CD8-positive, alpha-beta T cell (primary cell): ENCODE measurements at regions of chr3 and their contacts with region 1.

Region 1: DNA sequence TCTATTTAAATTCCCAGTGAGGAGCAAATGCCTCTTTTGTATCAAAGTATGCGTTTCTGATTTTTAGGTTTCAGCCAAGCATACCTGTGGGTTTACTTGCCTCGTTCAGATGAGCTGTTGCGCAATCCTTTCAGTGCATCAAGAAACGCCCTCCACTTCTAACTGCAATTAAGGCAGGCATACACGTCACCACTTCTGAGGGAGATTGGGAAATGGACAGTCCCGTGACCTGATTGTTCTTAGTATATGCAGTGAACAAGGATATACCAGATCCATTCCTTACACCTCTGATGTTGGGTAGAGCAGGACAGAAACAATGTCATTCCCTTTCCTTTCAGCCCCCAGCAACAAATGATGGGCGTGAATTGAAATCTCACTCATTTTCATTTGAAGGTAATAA is 219.0 kb downstream of the ITPR1 start:
- DNase-seq: peak in 1 of 9 experiments; percentile 16
- ATAC-seq: no peak
- H3K4me3 ChIP-seq: no peak overlapping the region
- H3K4me3 Mint-ChIP-seq: no peak overlapping the region
- H3K27ac ChIP-seq: no peak overlapping the region
- H3K27ac Mint-ChIP-seq: no peak overlapping the region
- H3K4me1 ChIP-seq: no peaks in the 10 kb centered on the region
- H3K4me1 Mint-ChIP-seq: no peaks in the 10 kb centered on the region
- H3K27me3 ChIP-seq: no peaks in the 10 kb centered on the region
- H3K27me3 Mint-ChIP-seq: no peaks in the 10 kb centered on the region
- CTCF ChIP-seq: no peak

Region 2: DNA sequence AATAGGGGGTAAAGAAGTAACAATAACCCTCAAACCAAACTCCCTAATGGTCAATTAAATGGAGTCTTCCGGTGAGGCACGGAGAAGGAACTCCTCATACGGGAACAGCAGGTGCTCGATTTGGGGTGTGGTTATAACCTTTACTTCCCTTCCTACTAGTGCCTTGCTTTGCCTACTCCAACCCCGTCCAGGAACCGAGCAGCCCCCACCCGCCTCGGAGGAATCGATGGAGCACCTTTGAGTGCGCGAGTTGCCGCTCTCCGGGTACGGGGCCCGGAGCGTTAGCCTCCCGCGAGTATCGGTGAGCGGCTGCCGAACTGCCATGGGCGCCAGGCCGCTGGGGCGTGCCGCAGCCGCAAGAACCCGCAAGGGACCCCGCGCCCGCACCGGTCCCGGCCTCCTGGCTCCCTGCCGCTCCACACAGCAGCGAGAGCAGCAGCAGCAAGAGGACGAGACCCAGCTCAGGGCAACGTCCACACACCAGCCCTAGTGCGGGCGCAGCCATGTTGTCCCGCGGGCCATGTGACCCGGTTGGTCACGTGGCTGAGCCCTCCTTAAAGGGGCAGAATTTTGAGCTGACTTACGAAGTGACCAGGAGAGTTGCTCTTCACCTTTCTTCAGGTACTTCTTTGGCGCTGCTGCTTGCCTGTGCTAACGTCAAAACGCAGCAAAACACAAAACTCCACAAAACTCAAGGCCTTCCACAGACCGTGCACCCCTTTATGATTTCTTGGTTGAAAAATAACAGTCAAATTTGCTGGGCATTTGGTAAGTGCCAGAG is 245.2 kb before region 1 on chr3 and contains the start of gene SUMF1:
- CTCF ChIA-PET with region 1: no interaction called
- POLR2A ChIA-PET with region 1: no interaction called
- intact Hi-C with region 1: loop called in 1 of 2 experiments (anchors 5 kb)
- DNase-seq: peak; percentile 34 to 85 (median 73)
- ATAC-seq: peak; percentile 93
- H3K4me3 ChIP-seq: peak within 1 kb of the TSS; percentile 75 to 76
- H3K4me3 Mint-ChIP-seq: peak within 1 kb of the TSS; percentile 91
- H3K27ac ChIP-seq: peak within 1 kb of the TSS; percentile 68 to 72
- H3K27ac Mint-ChIP-seq: peak within 1 kb of the TSS; percentile 95
- H3K4me1 ChIP-seq: peaks cover 13% of the 10 kb centered on the region
- H3K4me1 Mint-ChIP-seq: peaks cover 23% of the 10 kb centered on the region
- H3K27me3 ChIP-seq: no peaks in the 10 kb centered on the region
- H3K27me3 Mint-ChIP-seq: no peaks in the 10 kb centered on the region
- CTCF ChIP-seq: no peak
- total RNA-seq, gene SUMF1: 7.6 to 7.8 TPM

Region 3: GRCh38 chr3:4524088-4525023 is 187.8 kb before region 1 on chr3:
- CTCF ChIA-PET with region 1: no interaction called
- POLR2A ChIA-PET with region 1: no interaction called
- intact Hi-C with region 1: no loop called
- DNase-seq: no peak
- ATAC-seq: no peak
- H3K4me3 ChIP-seq: no peak overlapping the region
- H3K4me3 Mint-ChIP-seq: no peak overlapping the region
- H3K27ac ChIP-seq: no peak overlapping the region
- H3K27ac Mint-ChIP-seq: no peak overlapping the region
- H3K4me1 ChIP-seq: peaks cover 5% of the 10 kb centered on the region
- H3K4me1 Mint-ChIP-seq: peaks cover 35% of the 10 kb centered on the region
- H3K27me3 ChIP-seq: no peaks in the 10 kb centered on the region
- H3K27me3 Mint-ChIP-seq: no peaks in the 10 kb centered on the region
- CTCF ChIP-seq: no peak

Region 4: GRCh38 chr3:4776980-4777581 is 64.9 kb after region 1 on chr3:
- CTCF ChIA-PET with region 1: interaction called, 14 read pairs
- POLR2A ChIA-PET with region 1: no interaction called
- intact Hi-C with region 1: no loop called
- DNase-seq: no peak
- ATAC-seq: no peak
- H3K4me3 ChIP-seq: no peak overlapping the region
- H3K4me3 Mint-ChIP-seq: no peak overlapping the region
- H3K27ac ChIP-seq: no peak overlapping the region
- H3K27ac Mint-ChIP-seq: peak overlapping the region; percentile 76
- H3K4me1 ChIP-seq: no peaks in the 10 kb centered on the region
- H3K4me1 Mint-ChIP-seq: no peaks in the 10 kb centered on the region
- H3K27me3 ChIP-seq: no peaks in the 10 kb centered on the region
- H3K27me3 Mint-ChIP-seq: no peaks in the 10 kb centered on the region
- CTCF ChIP-seq: no peak

Region 5: DNA sequence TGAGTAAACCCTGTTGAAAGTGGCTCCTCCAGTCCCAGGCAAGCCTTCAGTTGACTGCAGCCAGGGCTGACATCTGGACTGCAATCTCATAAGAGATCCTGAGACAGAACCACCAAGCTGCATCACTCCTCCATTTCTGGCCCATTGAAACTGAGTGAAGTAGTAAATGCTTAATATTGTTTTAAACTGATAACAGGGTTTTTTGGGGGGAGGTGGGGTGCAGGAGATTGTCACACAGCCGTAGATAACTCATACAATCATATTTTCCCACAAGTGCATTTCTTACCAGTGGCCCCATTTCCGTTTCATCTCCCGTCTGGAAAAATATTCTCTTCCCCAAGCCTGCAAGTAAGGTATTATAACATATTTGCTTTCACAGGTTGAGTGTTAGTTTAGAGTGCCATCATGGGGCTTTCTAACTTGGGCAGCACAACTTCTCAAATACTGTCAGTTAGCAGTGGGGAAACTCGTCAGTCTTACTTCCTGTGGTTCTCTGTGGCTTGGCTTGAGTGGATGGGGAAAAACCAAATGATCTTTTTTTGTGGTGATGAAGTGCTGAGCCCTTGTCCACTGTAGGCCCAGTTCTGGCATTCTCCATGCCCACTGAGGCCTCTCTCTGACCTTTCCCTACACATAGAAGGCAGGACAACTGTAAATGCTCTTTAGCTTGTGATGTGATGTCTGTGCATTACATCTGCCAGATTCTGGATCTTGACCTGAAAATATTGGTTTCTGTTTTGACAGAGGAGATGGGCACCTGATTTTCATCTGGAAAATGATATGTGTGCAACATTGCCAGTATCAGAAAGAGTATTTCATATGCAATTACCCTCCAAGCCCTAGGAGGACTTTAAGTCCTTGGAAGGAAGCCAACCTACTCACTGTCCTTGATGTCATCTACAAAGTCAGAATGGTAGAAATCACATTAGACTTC is 177.0 kb after region 1 on chr3:
- CTCF ChIA-PET with region 1: interaction called, 3 read pairs
- POLR2A ChIA-PET with region 1: no interaction called
- intact Hi-C with region 1: loop called (anchors 2 to 10 kb)
- DNase-seq: peak in 4 of 9 experiments; percentile 11 to 83 (median 43)
- ATAC-seq: peak; percentile 79
- H3K4me3 ChIP-seq: no peak overlapping the region
- H3K4me3 Mint-ChIP-seq: no peak overlapping the region
- H3K27ac ChIP-seq: peak overlapping the region in 1 of 2 experiments; percentile 45
- H3K27ac Mint-ChIP-seq: peak overlapping the region; percentile 64
- H3K4me1 ChIP-seq: peaks cover 17% of the 10 kb centered on the region
- H3K4me1 Mint-ChIP-seq: peaks cover 19% of the 10 kb centered on the region
- H3K27me3 ChIP-seq: no peaks in the 10 kb centered on the region
- H3K27me3 Mint-ChIP-seq: no peaks in the 10 kb centered on the region
- CTCF ChIP-seq: no peak

Region 6: DNA sequence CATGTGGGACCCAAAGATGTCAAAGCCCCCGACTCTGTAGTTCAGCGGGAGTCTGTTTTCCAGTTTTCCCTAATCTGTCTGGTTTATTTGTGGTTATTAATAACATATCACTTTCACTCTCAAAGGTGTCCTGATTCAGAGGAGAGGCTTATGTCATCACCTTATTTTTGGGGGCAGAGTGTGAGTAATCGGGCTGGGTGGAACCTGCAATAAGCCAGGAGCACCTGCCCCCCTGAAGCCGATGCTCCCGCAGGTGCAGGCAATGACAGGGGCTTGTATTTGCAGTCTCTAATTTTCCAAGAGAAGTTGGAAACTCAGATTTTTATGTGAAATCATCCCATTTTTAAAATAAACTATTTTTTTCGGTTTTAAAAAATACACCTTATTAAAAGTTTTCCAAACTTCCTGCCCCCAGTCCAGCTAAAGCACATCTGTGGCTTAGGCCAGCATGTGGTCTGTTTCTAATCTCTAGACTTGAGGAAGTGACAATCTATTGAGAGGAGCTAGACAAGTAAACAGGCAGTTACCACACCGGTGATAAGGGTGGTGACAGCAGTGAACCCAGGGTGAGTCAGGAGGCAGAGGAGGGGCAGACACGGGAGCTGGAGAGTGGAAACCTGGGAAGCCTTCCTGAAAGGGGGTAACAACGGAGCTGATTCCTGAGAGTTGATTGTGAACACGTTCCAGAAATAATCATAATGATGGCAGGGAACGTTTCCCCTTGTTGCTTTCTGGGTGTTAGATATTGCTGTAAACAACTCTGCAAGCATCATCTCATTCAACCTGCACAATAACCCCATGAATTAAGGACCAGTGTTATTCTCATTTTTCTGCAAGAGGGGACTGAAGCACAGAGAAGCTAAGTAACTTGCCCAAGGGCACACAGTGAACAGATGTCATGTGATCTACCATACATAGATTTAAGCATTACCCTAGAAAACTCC is 304.3 kb after region 1 on chr3:
- CTCF ChIA-PET with region 1: interaction called, 83 read pairs
- POLR2A ChIA-PET with region 1: no interaction called
- intact Hi-C with region 1: no loop called
- DNase-seq: peak in 8 of 9 experiments; percentile 32 to 77 (median 58)
- ATAC-seq: peak; percentile 53
- H3K4me3 ChIP-seq: no peak overlapping the region
- H3K4me3 Mint-ChIP-seq: no peak overlapping the region
- H3K27ac ChIP-seq: peak overlapping the region in 1 of 2 experiments; percentile 1
- H3K27ac Mint-ChIP-seq: peak overlapping the region; percentile 77
- H3K4me1 ChIP-seq: peaks cover 24% of the 10 kb centered on the region
- H3K4me1 Mint-ChIP-seq: peaks cover 42% of the 10 kb centered on the region
- H3K27me3 ChIP-seq: no peaks in the 10 kb centered on the region
- H3K27me3 Mint-ChIP-seq: peaks cover 2% of the 10 kb centered on the region
- CTCF ChIP-seq: no peak

Region 7: DNA sequence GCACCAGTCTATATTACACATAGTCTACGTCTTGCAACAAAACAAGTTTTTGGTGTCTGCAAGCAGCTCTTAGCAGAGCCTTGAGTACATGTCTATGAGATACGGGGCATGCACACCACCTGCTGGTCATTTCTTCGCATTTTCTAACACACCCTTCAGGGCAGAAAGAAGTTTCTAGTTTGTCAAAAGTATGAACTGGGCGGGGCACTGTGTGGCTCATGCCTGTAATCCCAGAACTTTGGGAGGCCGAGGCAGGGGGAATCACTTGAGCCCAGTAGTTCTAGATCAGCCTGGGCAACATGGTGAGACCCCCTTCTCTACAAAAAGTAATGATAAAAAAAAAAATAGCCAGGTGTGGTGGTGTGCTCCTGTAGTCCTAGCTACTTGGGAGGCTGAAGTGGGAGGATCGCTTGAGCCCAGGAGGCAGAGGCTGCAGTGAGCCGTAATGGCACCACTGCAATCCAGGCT is 345.7 kb after region 1 on chr3:
- CTCF ChIA-PET with region 1: interaction called, 300 read pairs
- POLR2A ChIA-PET with region 1: interaction called, 4 read pairs
- intact Hi-C with region 1: loop called (anchors 1 kb)
- DNase-seq: peak; percentile 34 to 87 (median 69)
- ATAC-seq: peak; percentile 96
- H3K4me3 ChIP-seq: no peak overlapping the region
- H3K4me3 Mint-ChIP-seq: no peak overlapping the region
- H3K27ac ChIP-seq: no peak overlapping the region
- H3K27ac Mint-ChIP-seq: no peak overlapping the region
- H3K4me1 ChIP-seq: no peaks in the 10 kb centered on the region
- H3K4me1 Mint-ChIP-seq: no peaks in the 10 kb centered on the region
- H3K27me3 ChIP-seq: peaks cover 0 to 4% of the 10 kb centered on the region in 2 experiments
- H3K27me3 Mint-ChIP-seq: peaks cover 2% of the 10 kb centered on the region
- CTCF ChIP-seq: peak; percentile 63

Region 8: DNA sequence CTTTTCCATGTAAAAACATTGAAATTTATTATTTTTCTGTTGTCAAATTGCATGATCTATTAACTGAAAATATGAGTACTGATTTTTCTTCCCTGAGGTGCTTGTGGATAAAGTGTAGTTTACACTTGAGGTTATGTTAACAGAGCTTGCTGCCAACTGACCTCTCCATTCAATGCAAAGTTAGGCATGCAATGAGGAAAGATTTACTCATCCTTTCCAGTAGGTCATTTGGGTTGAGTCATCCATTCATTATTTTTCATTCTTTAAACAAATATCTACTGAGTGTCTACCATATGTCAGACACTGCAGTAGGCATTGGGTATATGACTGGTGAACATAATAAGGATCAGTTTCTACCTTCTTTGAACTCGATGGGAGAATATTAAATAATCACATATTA is 1079.4 kb after region 1 on chr3:
- CTCF ChIA-PET with region 1: no interaction called
- POLR2A ChIA-PET with region 1: no interaction called
- intact Hi-C with region 1: no loop called
- DNase-seq: no peak
- ATAC-seq: no peak
- H3K4me3 ChIP-seq: no peak overlapping the region
- H3K4me3 Mint-ChIP-seq: no peak overlapping the region
- H3K27ac ChIP-seq: no peak overlapping the region
- H3K27ac Mint-ChIP-seq: no peak overlapping the region
- H3K4me1 ChIP-seq: no peaks in the 10 kb centered on the region
- H3K4me1 Mint-ChIP-seq: no peaks in the 10 kb centered on the region
- H3K27me3 ChIP-seq: no peaks in the 10 kb centered on the region
- H3K27me3 Mint-ChIP-seq: no peaks in the 10 kb centered on the region
- CTCF ChIP-seq: no peak